ENCODE measurements at regions of chr3 and their contacts with region 1.

Region 1: DNA sequence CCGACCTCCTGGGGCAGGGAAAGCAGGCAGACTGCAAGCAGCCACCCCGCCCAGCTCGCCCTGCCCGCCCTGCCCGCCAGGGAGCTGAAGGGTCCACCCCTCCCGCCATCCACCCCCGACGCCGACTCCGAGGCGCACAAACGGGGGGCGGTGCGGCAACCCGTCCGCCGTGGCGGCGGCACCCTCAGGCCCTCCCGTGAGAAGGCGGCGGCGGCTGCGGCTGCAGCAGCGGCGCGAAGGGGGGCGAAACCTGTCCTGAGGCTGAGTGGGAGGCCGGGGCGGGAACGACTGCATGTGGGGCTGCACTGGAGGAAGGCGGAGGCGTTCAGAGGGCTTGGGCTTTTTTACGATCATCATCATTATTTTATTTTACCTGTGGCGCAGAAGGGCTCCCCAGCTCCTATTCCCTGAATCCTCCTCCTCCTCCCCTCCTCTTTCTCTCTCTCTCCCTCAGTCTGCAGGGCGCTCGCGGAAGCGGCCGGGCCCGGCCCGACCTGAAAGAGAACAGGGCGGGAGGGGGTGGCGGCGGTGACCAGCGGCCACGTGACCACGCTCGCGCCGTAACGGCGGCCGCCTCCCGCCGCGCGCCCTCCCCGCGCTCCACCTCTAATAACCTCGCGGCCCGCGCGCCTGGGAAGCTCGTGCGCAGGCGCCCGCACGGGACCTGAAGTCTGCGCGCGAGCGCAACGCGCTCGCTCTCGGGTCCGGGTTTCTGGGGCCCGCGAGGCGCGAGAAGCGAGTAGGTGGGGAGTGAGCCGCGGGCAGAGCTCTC is at the start of gene TBC1D5:
- DNase-seq: peak; percentile 85 to 97
- H3K4me3 ChIP-seq: peak within 1 kb of the TSS; percentile 70
- H3K27ac ChIP-seq: peak within 1 kb of the TSS; percentile 95
- H3K4me1 ChIP-seq: peaks cover 30% of the 10 kb centered on the region
- H3K27me3 ChIP-seq: no peaks in the 10 kb centered on the region
- CTCF ChIP-seq: no peak; the same call in 1 of the 2 replicates
- total RNA-seq, gene TBC1D5: 41.2 and 54.0 TPM in 2 replicates

Region 2: DNA sequence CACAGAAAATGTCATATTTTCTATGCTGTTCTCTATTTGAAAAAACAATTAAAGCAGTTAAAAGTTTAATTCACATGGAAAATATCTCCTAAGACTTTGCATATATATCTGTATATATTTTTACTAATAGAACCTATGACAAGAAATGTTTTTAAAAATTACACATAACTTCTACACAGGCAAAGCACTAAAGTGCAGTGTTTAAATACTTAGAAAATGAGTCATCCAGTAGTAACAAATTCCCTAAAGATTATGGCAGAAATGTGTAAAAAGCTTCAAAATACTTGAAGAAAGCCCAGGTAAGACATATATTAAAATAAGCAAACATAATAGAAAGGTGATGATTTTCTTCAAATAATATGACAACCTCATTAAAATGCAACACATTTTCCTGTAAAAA is 236.4 kb before region 1 on chr3:
- CTCF ChIA-PET with region 1: no interaction called
- POLR2A ChIA-PET with region 1: no interaction called
- intact Hi-C with region 1: loop called (anchors 5 kb)
- DNase-seq: no peak
- H3K4me3 ChIP-seq: no peak overlapping the region
- H3K27ac ChIP-seq: no peak overlapping the region
- H3K4me1 ChIP-seq: peaks cover 10% of the 10 kb centered on the region
- H3K27me3 ChIP-seq: no peaks in the 10 kb centered on the region
- CTCF ChIP-seq: no peak

Region 3: DNA sequence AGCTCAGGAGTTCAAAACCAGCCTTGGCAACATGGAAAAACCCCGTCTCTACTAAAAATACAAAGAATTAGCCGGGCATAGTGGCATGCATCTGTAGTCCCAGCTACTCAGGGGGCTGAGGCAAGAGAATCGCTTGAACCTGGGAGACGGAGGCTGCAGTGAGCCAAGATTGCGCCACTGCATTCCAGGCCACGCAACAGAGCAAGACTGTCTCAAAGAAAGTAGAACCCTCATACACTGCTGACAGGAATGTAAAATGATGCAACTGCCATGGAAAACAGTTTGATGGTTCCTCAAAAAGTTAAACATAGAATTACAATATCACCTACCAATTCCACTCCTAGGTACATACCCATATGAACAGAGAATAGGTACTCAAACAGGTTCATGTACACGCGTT is 158.8 kb before region 1 on chr3:
- CTCF ChIA-PET with region 1: no interaction called
- POLR2A ChIA-PET with region 1: no interaction called
- intact Hi-C with region 1: no loop called
- DNase-seq: no peak
- H3K4me3 ChIP-seq: no peak overlapping the region
- H3K27ac ChIP-seq: no peak overlapping the region
- H3K4me1 ChIP-seq: no peaks in the 10 kb centered on the region
- H3K27me3 ChIP-seq: no peaks in the 10 kb centered on the region
- CTCF ChIP-seq: no peak

Region 4: DNA sequence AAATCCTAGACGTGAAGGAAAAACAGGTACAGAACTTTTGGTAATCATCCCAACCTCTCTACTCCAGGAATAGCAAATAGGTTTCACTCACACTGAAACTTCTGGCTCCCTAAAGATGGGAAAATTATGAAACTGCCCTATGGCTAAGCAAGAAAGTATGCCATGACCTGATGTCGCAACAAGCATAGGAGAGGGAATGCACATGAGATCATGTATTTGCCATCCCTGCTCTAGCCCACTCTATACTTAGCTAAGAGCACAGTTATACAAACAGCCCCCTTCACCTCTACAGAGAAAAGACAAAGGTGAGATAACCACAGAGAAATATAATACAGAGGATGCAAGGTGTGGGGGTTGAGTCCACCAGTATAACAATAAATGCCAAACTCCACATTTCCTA is 102.5 kb before region 1 on chr3:
- CTCF ChIA-PET with region 1: no interaction called
- POLR2A ChIA-PET with region 1: interaction called, 9 read pairs
- intact Hi-C with region 1: loop called (anchors 1 kb)
- DNase-seq: peak; percentile 51 to 53
- H3K4me3 ChIP-seq: no peak overlapping the region
- H3K27ac ChIP-seq: peak overlapping the region; percentile 91
- H3K4me1 ChIP-seq: peaks cover 39% of the 10 kb centered on the region
- H3K27me3 ChIP-seq: no peaks in the 10 kb centered on the region
- CTCF ChIP-seq: no peak

Region 5: DNA sequence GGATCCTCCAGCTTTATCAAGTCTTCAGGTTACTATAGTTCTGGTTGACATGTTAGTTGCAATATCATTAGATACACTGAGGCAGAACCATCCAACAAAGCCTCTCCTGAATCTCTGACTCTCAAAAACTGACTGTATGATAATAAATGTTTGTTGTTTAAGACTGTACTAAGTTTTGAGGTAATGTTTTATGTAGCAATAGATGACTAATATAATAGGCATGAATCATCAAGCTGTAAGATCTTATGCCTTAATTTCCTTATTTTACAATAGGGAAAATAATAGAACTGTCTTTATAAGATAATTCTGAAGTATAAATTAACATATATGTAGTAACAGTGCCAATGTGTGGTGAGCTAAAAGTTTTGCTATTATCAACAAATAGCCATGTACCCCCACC is 89.1 kb after region 1 on chr3:
- CTCF ChIA-PET with region 1: no interaction called
- POLR2A ChIA-PET with region 1: interaction called, 6 read pairs
- intact Hi-C with region 1: loop called (anchors 5 kb)
- DNase-seq: peak in 1 of 2 experiments; percentile 39
- H3K4me3 ChIP-seq: no peak overlapping the region
- H3K27ac ChIP-seq: no peak overlapping the region
- H3K4me1 ChIP-seq: peaks cover 5% of the 10 kb centered on the region; the same call in 1 of the 2 replicates
- H3K27me3 ChIP-seq: no peaks in the 10 kb centered on the region
- CTCF ChIP-seq: no peak

Region 6: DNA sequence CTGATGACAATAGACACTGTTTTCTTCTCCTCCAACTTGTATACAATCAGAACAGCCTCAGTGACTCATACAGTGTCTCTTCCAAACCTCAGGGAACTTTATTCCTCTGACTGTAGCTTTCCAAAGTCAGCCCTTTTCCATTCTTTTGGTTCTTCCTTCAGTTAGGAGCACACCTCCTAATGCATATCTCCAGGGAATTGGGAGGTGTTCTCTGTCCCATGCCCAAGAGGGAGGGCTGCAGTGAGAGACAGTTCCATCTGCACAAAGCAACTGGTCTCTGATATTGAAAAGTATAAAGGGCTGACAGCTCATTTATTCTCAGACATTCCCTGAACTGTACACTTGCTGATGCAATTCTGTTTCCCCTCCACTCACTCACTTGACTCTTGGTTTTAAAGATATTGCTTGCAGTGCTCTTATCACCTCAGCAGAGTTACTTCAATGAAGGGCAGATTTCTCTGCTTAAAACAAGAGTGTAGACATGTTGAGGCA is 337.9 kb after region 1 on chr3:
- CTCF ChIA-PET with region 1: no interaction called
- POLR2A ChIA-PET with region 1: no interaction called
- intact Hi-C with region 1: no loop called
- DNase-seq: no peak
- H3K4me3 ChIP-seq: no peak overlapping the region
- H3K27ac ChIP-seq: peak overlapping the region; percentile 11; the same call in 1 of the 2 replicates
- H3K4me1 ChIP-seq: peaks cover 12% of the 10 kb centered on the region; the same call in 1 of the 2 replicates
- H3K27me3 ChIP-seq: no peaks in the 10 kb centered on the region
- CTCF ChIP-seq: no peak

Region 7: GRCh38 chr3:18389108-18389733 is 646.9 kb after region 1 on chr3:
- CTCF ChIA-PET with region 1: interaction called, 3 read pairs
- POLR2A ChIA-PET with region 1: no interaction called
- intact Hi-C with region 1: loop called (anchors 10 kb)
- DNase-seq: peak in 1 of 2 experiments; percentile 7
- H3K4me3 ChIP-seq: no peak overlapping the region
- H3K27ac ChIP-seq: no peak overlapping the region
- H3K4me1 ChIP-seq: no peaks in the 10 kb centered on the region
- H3K27me3 ChIP-seq: no peaks in the 10 kb centered on the region
- CTCF ChIP-seq: peak; percentile 83

Region 8: DNA sequence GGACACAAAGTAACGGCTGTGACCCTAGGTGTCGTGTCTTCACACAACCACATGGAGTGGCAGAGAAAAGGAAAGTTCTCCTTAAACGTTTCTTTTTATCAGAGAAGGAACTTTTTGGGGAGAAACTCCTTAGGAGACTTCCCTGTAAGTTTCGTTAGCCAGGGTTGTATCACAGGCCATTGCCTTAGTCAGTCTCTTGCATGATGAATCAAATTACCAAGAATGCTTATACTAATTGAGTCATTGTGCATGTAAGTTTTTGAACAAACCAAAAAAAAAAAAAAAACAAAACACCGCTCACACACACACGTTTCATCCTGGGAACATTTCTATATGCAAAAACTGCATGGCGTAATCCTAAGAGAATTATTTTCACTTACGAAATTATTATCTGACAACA is 833.3 kb after region 1 on chr3:
- CTCF ChIA-PET with region 1: no interaction called
- POLR2A ChIA-PET with region 1: no interaction called
- intact Hi-C with region 1: no loop called
- DNase-seq: no peak
- H3K4me3 ChIP-seq: no peak overlapping the region
- H3K27ac ChIP-seq: no peak overlapping the region
- H3K4me1 ChIP-seq: no peaks in the 10 kb centered on the region; the same call in 1 of the 2 replicates
- H3K27me3 ChIP-seq: no peaks in the 10 kb centered on the region
- CTCF ChIP-seq: no peak

Measured in PC-9 (cell line).